ENCODE measurements at regions of chr17 and their contacts with region 1.

Region 1: GRCh38 chr17:32671896-32672295 is 185.1 kb downstream of the CDK5R1 start:
- DNase-seq: peak; percentile 83 to 84
- ATAC-seq: peak; percentile 22
- H3K4me3 ChIP-seq: no peak overlapping the region
- H3K27ac ChIP-seq: no peak overlapping the region
- H3K4me1 ChIP-seq: peaks cover 0 to 4% of the 10 kb centered on the region in 2 donors
- H3K27me3 ChIP-seq: no peaks in the 10 kb centered on the region

Region 2: GRCh38 chr17:32709562-32709961 is 37.7 kb after region 1 on chr17:
- intact Hi-C with region 1: loop called in 1 of 2 experiments (anchors 2 kb)
- DNase-seq: no peak
- ATAC-seq: no peak
- H3K4me3 ChIP-seq: no peak overlapping the region
- H3K27ac ChIP-seq: no peak overlapping the region
- H3K4me1 ChIP-seq: no peaks in the 10 kb centered on the region
- H3K27me3 ChIP-seq: no peaks in the 10 kb centered on the region